Vagina (tissue), 2 donors: ENCODE measurements at regions of chr10 and their contacts with region 1.

Region 1: GRCh38 chr10:94443047-94443446 is 40.7 kb downstream of the TBC1D12 start:
- DNase-seq: no peak
- H3K4me3 ChIP-seq: no peak overlapping the region
- H3K27ac ChIP-seq: no peak overlapping the region
- H3K4me1 ChIP-seq: peaks cover 7% of the 10 kb centered on the region
- H3K27me3 ChIP-seq: no peaks in the 10 kb centered on the region
- CTCF ChIP-seq: no peak
- POLR2A ChIP-seq: no peak

Region 2: DNA sequence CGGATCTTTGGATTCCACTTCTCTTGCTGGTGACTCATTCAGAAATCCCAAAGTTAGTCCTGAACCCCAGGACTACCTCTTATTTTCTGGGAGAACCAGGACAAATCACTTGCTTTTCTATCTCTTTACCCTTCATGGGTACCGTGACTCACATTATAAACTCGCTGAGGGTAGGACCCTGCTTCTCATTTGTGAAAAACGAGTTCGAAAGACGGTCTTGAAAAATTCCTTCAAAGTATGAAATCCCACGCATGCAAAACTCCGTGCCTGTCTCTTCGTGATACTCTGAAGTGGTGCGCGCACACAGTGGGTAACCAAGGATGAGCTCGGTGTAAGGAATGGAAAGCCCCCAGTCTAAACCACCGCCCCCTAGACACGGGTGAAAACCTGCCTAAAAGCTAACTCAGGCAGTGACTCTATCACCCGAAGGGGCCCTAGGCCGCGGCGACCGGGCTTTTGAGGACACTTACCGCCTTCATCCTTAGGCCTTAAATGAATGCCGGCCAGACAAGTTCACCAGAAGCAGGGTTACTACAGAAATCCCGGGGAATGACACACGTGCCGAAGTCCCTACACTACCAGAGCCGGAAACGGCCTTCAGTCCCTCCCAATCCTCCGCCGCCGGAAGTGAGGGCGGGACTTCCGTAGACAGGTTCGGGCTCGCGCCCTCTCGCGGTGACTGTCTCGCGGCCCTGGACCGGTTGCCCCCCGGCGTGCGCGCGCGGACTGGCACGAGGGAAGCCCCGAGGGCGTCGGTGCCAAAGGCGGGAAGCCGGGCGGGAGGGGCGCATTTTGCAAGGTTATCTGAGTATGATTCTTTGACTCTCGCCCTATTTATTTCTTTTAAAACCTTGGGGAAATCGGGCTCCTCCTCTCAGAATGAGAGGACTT is 80.4 kb before region 1 on chr10 and contains the start of gene NOC3L:
- intact Hi-C with region 1: loop called (anchors 10 kb)
- DNase-seq: peak in 1 of 2 donors; percentile 94
- H3K4me3 ChIP-seq: peak within 1 kb of the TSS; percentile 82 to 83
- H3K27ac ChIP-seq: peak within 1 kb of the TSS; percentile 37
- H3K4me1 ChIP-seq: peaks cover 21% of the 10 kb centered on the region
- H3K27me3 ChIP-seq: no peaks in the 10 kb centered on the region
- CTCF ChIP-seq: peak; percentile 70 to 85 (median 81)
- POLR2A ChIP-seq: no peak
- total RNA-seq, gene NOC3L: 21.1 TPM

Region 3: GRCh38 chr10:94481410-94481809 is 38.4 kb after region 1 on chr10:
- intact Hi-C with region 1: no loop called
- DNase-seq: no peak
- H3K4me3 ChIP-seq: no peak overlapping the region
- H3K27ac ChIP-seq: no peak overlapping the region
- H3K4me1 ChIP-seq: peaks cover 6% of the 10 kb centered on the region
- H3K27me3 ChIP-seq: no peaks in the 10 kb centered on the region
- CTCF ChIP-seq: no peak
- POLR2A ChIP-seq: no peak

Region 4: DNA sequence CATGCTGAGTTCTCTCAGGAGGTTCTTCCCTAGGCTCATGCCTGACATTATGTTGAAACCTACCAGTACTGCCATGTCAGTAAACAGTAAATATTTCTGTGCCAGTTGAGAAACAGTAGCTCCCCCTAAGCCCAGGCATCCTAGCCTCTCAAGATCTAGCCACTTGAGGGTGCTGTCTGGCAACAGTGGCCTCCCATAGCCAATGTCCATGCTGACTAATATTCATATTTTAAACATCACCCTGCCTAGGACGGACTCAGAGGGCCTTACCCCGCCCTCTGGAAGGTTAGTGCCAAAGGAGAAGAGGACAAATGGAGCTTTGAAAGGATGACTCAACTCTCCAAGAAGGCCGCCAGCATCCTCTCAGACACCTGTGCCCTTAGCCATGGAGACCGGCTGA is 758.7 kb after region 1 on chr10:
- intact Hi-C with region 1: no loop called
- DNase-seq: no peak
- H3K4me3 ChIP-seq: no peak overlapping the region
- H3K27ac ChIP-seq: no peak overlapping the region
- H3K4me1 ChIP-seq: no peaks in the 10 kb centered on the region
- H3K27me3 ChIP-seq: no peaks in the 10 kb centered on the region
- CTCF ChIP-seq: no peak
- POLR2A ChIP-seq: no peak